ENCODE measurements at regions of chr16 and their contacts with region 1.

Region 1: DNA sequence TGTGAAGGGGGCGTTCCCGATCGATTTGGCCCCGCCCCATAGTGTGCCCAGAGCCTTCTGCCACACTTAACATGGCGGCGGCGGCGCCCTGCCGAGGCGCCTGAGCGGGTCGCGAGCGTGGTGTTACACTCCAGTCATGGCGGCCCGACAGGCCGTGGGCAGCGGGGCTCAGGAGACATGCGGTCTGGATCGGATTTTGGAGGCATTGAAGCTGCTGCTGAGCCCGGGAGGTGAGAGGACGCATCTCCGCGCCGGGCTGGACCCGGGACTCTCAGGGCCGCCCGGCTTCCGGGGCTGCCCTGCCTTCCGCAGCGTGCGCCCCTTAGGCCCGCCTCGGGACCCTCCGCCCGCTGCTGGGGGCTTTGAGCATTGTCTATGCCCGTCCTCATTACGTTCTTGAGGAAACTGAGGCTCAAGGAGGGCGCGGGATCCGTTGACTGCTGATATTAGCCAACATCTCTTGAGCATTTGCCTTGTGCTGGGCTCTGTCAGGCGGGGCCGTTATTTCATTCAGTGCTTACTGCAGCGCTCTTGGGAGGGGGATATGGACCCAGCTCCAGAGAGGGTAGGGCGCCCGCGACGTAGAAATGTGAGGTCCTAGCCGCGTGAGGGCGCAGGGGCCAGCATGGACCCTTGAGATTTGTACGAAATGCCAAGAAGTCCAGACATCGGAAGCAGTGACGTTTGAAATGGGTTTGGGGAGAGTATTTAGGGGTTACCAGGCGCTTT is at the start of gene TANGO6:
- DNase-seq: peak; percentile 89
- H3K4me3 ChIP-seq: peak within 1 kb of the TSS; percentile 55 to 97 (median 68)
- H3K27ac ChIP-seq: peak within 1 kb of the TSS; percentile 80 to 89 (median 84)
- H3K4me1 ChIP-seq: peaks cover 0 to 26% (median 11%) of the 10 kb centered on the region in 4 donors
- H3K27me3 ChIP-seq: no peaks in the 10 kb centered on the region
- CTCF ChIP-seq: peak in 1 of 5 experiments; percentile 5
- EP300 ChIP-seq: no peak
- POLR2A ChIP-seq: peak; percentile 65
- total RNA-seq, gene TANGO6: 10.6 to 55.4 (median 22.8) TPM

Region 2: GRCh38 chr16:68406451-68407152 is 437.0 kb before region 1 on chr16:
- in situ Hi-C with region 1: no loop called
- intact Hi-C with region 1: no loop called
- DNase-seq: no peak
- H3K4me3 ChIP-seq: no peak overlapping the region
- H3K27ac ChIP-seq: no peak overlapping the region
- H3K4me1 ChIP-seq: peaks cover 0 to 6% (median 0%) of the 10 kb centered on the region in 4 donors
- H3K27me3 ChIP-seq: no peaks in the 10 kb centered on the region
- CTCF ChIP-seq: no peak
- EP300 ChIP-seq: no peak
- POLR2A ChIP-seq: no peak

Region 3: DNA sequence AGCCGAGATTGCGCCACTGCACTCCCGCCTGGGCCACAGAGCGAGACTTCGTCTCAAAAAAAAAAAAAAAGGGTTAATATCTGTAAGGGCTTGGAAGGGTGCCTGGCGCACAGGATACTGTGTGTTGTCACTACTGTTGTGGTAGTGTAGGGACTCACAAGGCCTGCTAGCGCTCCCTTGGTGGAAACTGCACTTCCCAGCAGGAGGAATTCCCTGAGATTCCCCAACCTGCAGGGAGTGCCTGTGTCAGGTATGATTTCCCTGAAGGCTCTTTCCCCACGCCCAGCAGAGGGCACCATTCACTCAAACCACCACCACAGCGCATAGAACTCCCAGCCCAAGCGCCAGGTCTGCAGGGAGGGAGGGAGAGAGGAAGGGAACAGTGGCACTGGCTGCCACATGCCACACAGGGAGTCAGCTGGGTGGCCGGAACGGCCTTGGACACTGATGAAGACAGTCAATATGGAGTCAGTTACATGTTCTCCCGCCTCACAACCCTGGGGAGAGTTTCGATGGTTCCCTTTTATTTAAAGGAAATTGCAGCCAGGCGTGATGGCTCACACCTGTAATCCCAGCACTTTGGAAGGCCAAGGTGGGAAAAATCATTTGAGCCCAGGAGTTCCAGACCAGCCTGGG is 139.3 kb before region 1 on chr16:
- in situ Hi-C with region 1: no loop called
- intact Hi-C with region 1: no loop called
- DNase-seq: peak; percentile 92
- H3K4me3 ChIP-seq: no peak overlapping the region
- H3K27ac ChIP-seq: no peak overlapping the region
- H3K4me1 ChIP-seq: peaks cover 0 to 14% (median 6%) of the 10 kb centered on the region in 4 donors
- H3K27me3 ChIP-seq: no peaks in the 10 kb centered on the region
- CTCF ChIP-seq: peak; percentile 69 to 96 (median 79)
- EP300 ChIP-seq: no peak
- POLR2A ChIP-seq: no peak

Region 4: DNA sequence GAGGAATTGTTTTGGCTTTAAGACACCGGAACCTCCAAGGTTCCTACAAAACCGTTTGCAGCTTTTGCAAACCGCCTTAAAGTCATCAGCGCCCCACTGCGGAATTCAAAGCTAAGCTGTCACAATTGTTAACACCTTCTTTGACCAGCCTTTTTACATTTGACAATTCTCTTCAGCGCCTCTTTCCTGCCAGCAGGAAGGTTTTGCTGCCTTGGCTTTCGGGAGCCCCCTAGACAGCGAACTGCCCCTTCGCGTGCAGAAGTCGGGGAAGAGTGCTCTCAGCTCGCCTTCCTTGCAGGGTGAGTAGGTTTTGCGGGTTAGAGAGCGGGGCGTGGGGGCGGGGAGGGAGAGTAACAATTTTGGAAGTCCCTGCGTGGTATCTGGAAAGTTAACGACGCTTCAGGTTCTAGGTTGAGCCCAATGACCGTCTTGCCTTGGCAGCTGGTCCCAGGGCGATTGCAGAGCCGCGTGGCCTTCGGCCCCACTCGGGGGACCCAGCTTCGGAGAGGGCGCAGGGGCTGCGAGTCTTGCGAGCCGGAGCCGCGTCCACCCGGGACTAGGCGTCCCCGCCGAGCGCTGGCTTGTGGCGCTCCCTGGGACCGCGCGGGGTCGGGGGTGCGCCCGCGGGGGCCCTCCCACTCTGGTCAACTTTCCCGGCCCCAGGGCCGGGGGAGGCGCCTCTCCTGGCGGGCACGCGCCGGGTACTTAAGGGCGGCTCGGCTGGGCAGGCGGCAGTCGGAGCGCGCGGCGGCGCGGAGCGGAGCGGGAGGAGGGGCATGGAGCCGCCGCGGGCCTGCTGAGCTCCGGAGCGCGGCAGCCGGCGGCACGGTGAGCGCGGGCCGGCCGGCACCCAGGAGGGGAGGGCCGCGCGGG is 262.1 kb after region 1 on chr16 and contains the start of gene HAS3:
- in situ Hi-C with region 1: no loop called
- intact Hi-C with region 1: loop called (anchors 10 kb)
- DNase-seq: peak; percentile 75
- H3K4me3 ChIP-seq: peak within 1 kb of the TSS; percentile 26 to 67 (median 54)
- H3K27ac ChIP-seq: peak within 1 kb of the TSS in 3 of 4 donors; percentile 44 to 73 (median 60)
- H3K4me1 ChIP-seq: peaks cover 14 to 31% (median 29%) of the 10 kb centered on the region in 4 donors
- H3K27me3 ChIP-seq: peaks cover 28% of the 10 kb centered on the region
- CTCF ChIP-seq: peak in 3 of 5 experiments; percentile 8 to 23 (median 20)
- EP300 ChIP-seq: no peak
- POLR2A ChIP-seq: no peak
- total RNA-seq, gene HAS3: 0.20 to 12.0 (median 7.9) TPM

Measured in transverse colon (tissue), 4 donors.